IMR-90 (cell line): ENCODE measurements at regions of chr12 and their contacts with region 1.

Region 1: GRCh38 chr12:21169878-21170472 is 39.0 kb downstream of the SLCO1B1 start:
- DNase-seq: peak; percentile 25
- ATAC-seq: peak; percentile 77
- H3K4me3 ChIP-seq: no peak overlapping the region
- H3K27ac ChIP-seq: no peak overlapping the region
- H3K4me1 ChIP-seq: no peaks in the 10 kb centered on the region
- H3K27me3 ChIP-seq: no peaks in the 10 kb centered on the region
- CTCF ChIP-seq: peak; percentile 56
- POLR2A ChIP-seq: no peak
- RAD21 ChIP-seq: peak; percentile 59

Region 2: DNA sequence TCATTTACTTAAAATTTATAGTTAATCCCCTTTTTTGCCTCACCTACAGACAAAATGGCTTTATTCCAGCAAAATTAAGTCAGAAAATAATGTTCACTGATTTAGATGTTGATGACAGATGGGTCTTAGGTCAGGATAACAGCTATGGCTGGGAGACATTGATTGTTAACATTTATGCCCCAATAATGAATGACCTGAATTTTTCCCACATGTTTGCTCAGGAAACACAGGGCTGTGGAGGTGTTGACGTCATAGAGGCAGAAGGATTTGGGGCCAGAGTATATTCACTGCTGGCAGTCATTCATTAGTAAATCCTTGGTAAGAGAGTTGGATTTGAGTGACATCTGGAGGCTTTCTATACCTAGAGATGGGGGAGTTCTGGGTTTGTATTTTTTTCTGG is 680.3 kb before region 1 on chr12:
- CTCF ChIA-PET with region 1: no interaction called
- POLR2A ChIA-PET with region 1: no interaction called
- dilution Hi-C with region 1: no loop called
- in situ Hi-C with region 1: no loop called
- intact Hi-C with region 1: loop called (anchors 5 kb)
- DNase-seq: peak; percentile 36
- ATAC-seq: no peak
- H3K4me3 ChIP-seq: no peak overlapping the region
- H3K27ac ChIP-seq: no peak overlapping the region
- H3K4me1 ChIP-seq: peaks cover 17% of the 10 kb centered on the region
- H3K27me3 ChIP-seq: no peaks in the 10 kb centered on the region
- CTCF ChIP-seq: no peak
- POLR2A ChIP-seq: no peak
- RAD21 ChIP-seq: no peak